BJ (cell line): ENCODE measurements at regions of chr17 and their contacts with region 1.

Region 1: DNA sequence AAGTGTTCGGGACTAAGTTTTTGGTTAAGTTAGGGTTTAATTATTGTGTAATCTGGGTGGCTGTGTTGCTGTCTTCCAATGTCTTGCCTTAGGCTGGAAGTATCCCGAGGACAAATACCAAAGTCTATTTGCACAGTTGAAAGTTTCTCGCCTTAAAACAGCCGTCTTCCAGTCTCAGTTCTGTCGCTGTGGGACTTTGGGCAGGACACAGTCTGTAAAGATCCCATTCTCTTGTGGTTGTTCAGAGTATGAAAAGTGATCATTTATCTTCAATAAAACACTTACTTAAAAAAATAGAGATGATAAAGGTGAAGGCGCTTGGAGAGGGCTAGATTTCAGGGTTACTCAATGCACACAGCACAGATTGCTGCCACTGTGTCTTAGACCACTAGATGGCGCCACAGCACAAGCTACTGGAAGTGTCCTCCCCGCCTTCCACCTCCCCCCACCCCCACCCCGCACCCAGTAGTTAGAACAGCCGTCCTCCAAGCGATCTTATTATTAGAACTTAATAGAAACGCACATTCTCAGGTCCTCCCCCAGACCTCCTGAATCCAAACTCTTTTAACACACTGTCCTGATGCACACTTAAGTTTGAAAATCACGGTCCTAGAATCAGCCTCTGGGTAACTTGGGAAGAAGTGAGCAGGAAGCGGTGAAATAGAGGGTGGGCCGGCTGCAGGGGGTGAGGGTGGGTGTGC is 45.9 kb downstream of the AKAP1 start:
- DNase-seq: no peak
- H3K4me3 ChIP-seq: peak overlapping the region; percentile 14
- H3K27me3 ChIP-seq: no peaks in the 10 kb centered on the region
- CTCF ChIP-seq: peak; percentile 86

Region 2: GRCh38 chr17:56943505-56944125 is 187.3 kb before region 1 on chr17:
- CTCF ChIA-PET with region 1: no interaction called
- POLR2A ChIA-PET with region 1: no interaction called
- DNase-seq: no peak
- H3K4me3 ChIP-seq: no peak overlapping the region
- H3K27me3 ChIP-seq: no peaks in the 10 kb centered on the region
- CTCF ChIP-seq: no peak

Region 3: GRCh38 chr17:57009737-57010445 is 121.0 kb before region 1 on chr17:
- CTCF ChIA-PET with region 1: no interaction called
- POLR2A ChIA-PET with region 1: no interaction called
- DNase-seq: no peak
- H3K4me3 ChIP-seq: no peak overlapping the region
- H3K27me3 ChIP-seq: peaks cover 3% of the 10 kb centered on the region; the same call in 1 of the 2 replicates
- CTCF ChIP-seq: peak; percentile 76

Region 4: DNA sequence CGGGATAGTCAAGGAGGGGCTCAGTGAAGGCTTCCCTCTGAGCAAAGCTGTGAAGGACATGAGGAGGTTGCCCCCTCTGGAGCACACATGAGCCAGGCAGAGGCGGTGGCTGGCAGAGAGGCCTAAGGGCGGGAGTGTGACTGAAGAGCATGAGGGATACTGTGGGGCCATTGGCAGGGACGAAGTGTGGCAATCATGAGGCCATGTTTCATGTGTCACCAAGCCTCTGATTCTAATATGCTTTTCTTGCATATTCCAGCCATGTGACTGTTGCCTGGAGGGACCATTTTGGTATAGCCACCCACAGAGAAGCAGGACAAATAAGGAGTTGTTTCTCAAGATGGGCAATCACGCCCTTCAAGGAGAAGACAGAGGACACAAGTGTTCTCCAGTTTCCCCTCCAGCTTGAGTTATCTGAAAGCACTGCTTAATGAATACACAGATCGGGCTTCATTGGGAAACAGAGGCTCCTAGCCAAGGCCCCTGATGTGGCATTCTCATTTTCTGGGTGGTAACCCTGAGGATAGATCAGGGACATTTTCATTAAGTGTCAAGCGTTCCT is 22.1 kb after region 1 on chr17:
- CTCF ChIA-PET with region 1: no interaction called
- POLR2A ChIA-PET with region 1: no interaction called
- DNase-seq: no peak
- H3K4me3 ChIP-seq: no peak overlapping the region
- H3K27me3 ChIP-seq: no peaks in the 10 kb centered on the region; the same call in 1 of the 2 replicates
- CTCF ChIP-seq: no peak

Region 5: DNA sequence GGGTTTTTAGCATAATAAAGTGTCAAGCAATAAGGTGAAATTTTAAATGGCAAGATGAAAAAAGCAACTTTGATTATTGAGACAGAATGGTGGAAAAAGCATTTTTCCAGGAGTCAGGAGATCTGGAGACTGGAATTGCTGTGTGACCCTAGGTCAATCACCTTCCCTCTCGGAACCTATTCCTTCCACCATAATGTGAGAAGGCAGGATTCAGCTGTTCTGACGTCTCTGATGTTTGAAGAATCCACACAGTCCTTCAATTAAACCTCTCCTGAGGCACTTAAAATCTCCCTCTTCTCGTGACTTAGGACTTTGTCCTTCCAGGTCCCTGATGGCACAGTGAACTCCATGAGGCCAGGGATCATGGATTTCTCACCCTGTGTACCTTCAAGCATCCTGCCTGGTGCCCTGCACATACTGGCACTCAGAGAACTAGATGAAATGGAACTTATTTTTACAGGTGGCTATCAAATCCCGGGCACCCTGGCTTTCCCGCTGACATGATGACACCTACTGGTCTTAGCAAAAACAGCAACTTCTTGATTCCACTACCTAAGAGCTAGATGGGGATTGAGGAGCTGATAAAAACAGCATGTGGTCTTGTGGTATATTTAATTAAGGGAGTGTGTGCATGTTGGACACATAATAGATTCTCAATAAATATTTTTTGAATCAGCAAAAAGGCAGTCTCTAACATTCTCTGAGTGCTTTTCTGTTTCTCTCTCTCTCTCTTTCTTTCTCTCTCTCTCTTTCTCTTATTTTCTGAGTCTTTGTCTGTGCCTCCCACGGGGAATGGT is 616.5 kb after region 1 on chr17:
- CTCF ChIA-PET with region 1: interaction called, 10 read pairs
- POLR2A ChIA-PET with region 1: no interaction called
- DNase-seq: peak; percentile 9
- H3K4me3 ChIP-seq: no peak overlapping the region
- H3K27me3 ChIP-seq: peaks cover 11% of the 10 kb centered on the region
- CTCF ChIP-seq: peak; percentile 82

Region 6: GRCh38 chr17:57833179-57833939 is 702.4 kb after region 1 on chr17:
- CTCF ChIA-PET with region 1: interaction called, 25 read pairs
- POLR2A ChIA-PET with region 1: no interaction called
- DNase-seq: no peak
- H3K4me3 ChIP-seq: peak overlapping the region; percentile 38
- H3K27me3 ChIP-seq: no peaks in the 10 kb centered on the region
- CTCF ChIP-seq: peak; percentile 89